ENCODE measurements at regions of chr20 and their contacts with region 1.

Region 1: DNA sequence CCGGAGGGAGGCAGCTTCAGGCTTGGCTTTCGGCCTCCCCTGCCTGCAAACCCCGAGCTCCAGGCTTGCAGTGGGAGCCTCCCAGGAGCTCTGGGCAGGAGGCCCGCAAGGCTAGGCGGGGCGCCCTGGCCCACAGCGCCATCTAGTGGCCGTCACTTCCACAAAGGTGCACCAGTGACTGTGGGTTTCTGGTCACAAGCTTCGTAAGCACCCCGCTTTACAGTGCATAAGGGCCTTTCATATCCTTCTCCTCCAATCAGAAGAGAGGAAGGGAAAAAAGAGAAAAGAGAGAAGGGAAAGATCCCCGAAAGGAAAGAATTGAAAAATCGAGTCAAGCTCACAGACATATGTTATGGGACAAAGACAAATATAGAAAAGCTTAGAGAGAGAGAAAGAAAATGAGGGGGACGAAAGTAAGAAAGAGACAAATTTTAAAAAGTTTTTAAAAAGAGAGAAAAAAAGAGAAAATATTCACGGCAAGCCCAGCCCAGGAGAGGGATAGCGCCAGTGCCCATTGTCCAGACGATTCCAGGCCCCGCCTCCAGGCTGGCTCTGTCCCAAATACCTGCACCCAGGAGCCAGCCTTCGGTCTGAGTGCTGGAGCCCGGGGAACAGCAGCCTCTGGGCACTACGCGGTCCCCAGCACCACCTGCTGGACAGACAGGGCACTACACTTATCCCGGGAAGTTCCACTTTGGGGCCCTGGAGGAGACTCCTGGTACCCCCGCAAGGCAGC is 207.1 kb downstream of the PREX1 start:
- DNase-seq: peak; percentile 97
- ATAC-seq: peak; percentile 90
- H3K4me3 Mint-ChIP-seq: peak overlapping the region; percentile 73
- H3K27ac Mint-ChIP-seq: peak overlapping the region; percentile 50
- H3K4me1 Mint-ChIP-seq: peaks cover 8% of the 10 kb centered on the region; the same call in 1 of the 2 replicates
- H3K27me3 Mint-ChIP-seq: no peaks in the 10 kb centered on the region; the same call in 1 of the 2 replicates
- CTCF ChIP-seq: peak; percentile 84

Region 2: GRCh38 chr20:48188657-48189551 is 431.8 kb before region 1 on chr20:
- CTCF ChIA-PET with region 1: interaction called, 20 read pairs
- POLR2A ChIA-PET with region 1: interaction called, 3 read pairs
- DNase-seq: peak; percentile 34
- ATAC-seq: peak; percentile 63; the same call in 1 of the 2 replicates
- H3K4me3 Mint-ChIP-seq: no peak overlapping the region
- H3K27ac Mint-ChIP-seq: no peak overlapping the region; the same call in 1 of the 2 replicates
- H3K4me1 Mint-ChIP-seq: peaks cover 18% of the 10 kb centered on the region
- H3K27me3 Mint-ChIP-seq: no peaks in the 10 kb centered on the region; the same call in 1 of the 2 replicates
- CTCF ChIP-seq: no peak

Region 3: DNA sequence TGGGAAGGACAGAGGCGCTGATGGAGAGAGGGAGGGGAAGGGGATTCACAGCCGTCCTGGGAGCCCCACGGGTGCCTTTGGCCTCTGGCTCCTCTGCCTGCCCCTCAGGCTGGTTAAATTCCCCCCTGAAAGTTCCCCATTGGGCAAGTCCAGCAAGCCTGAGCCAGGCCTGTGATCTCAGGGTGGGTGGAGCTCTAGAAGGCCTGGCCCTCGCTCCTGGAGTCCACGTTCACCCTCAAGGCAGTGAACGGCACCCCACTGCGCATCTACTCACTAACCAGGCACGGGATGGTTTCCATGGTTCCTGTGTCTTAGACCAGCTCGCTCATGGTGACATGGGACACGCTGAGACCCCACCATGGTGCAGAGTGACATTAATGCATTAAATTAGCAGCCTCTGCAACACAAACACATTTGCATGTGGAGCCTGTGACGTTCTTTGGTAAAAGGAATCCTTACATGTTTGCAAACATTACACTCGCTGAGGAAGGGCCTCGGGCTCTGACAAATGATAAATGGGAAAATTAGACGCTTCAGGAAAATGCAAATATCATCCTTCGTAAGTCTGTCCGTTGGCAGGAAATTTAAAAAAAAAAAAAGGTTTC is 245.6 kb before region 1 on chr20:
- CTCF ChIA-PET with region 1: interaction called, 11 read pairs
- POLR2A ChIA-PET with region 1: no interaction called
- DNase-seq: no peak
- ATAC-seq: peak; percentile 12; the same call in 1 of the 2 replicates
- H3K4me3 Mint-ChIP-seq: no peak overlapping the region
- H3K27ac Mint-ChIP-seq: no peak overlapping the region
- H3K4me1 Mint-ChIP-seq: peaks cover 42% of the 10 kb centered on the region
- H3K27me3 Mint-ChIP-seq: peaks cover 4% of the 10 kb centered on the region; the same call in 1 of the 2 replicates
- CTCF ChIP-seq: no peak

Region 4: DNA sequence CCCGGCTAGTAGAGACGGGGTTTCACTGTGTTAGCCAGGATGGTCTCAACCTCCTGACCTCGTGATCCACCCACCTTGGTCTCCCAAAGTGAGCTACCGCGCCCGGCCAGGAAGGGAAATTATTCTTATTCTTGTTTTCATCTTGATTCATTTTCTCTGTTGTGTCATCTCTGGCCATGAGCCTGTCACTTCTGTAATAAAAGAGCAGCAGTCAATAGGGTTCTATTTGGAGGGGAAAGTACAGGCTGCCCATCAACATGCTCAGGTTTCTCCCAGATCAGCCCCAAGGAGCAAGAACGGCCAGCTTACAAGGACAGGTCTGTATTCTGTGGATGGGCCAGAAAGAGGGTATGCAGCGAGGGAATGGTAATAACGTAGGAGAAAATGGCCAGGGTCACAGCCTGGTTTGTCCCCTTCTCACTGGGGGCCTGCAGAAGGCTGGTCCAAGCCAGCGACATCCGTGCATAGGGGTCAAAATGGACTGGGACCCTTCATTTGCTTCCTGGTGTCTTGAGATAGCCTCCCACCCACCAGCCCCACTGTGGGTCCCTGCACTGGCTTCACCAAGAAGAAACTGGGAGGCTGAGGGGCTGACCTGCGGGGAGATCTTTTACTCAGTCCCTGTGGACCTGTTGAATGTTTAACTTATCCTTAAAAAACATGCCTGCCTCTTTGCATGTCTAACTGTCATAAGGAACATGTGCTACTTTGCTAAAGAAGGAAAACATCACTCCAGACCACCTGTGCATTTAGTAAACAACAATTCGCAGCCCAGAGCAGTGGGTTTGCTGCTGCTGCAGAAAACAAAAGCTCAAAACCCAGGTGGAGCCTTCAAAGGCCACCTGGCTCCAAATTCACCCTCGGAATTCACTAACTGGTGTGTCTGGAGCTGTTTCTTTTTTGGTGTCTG is 137.6 kb before region 1 on chr20:
- CTCF ChIA-PET with region 1: interaction called, 23 read pairs
- POLR2A ChIA-PET with region 1: no interaction called
- DNase-seq: no peak
- ATAC-seq: no peak
- H3K4me3 Mint-ChIP-seq: no peak overlapping the region
- H3K27ac Mint-ChIP-seq: no peak overlapping the region
- H3K4me1 Mint-ChIP-seq: peaks cover 28% of the 10 kb centered on the region
- H3K27me3 Mint-ChIP-seq: no peaks in the 10 kb centered on the region
- CTCF ChIP-seq: no peak

Region 5: DNA sequence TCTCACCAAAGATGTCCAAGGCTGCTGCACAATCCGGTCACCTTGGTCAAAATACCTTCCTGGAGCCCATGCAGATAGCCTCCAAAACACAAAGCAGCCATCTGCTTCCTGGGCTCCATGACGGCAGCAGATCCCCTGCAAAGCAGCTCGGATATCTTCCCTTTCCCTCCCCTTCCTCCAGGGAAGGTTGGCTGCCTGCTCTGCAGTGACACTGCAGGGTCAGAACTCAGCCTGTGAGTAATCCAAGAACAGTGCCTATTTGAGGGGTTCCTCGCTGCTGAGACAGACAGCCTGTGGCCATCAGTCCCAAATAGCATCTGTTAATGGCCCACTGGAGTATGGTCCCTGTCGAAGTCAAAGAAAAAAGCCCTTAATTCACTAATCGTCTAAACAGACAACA is 63.7 kb before region 1 on chr20:
- CTCF ChIA-PET with region 1: interaction called, 18 read pairs
- POLR2A ChIA-PET with region 1: no interaction called
- DNase-seq: no peak
- ATAC-seq: peak; percentile 43; the same call in 1 of the 2 replicates
- H3K4me3 Mint-ChIP-seq: no peak overlapping the region
- H3K27ac Mint-ChIP-seq: no peak overlapping the region
- H3K4me1 Mint-ChIP-seq: 0 out of 2 replicates have a peak, but pooled peaks cover 4% of the 10 kb centered on the region
- H3K27me3 Mint-ChIP-seq: no peaks in the 10 kb centered on the region
- CTCF ChIP-seq: no peak

Region 6: DNA sequence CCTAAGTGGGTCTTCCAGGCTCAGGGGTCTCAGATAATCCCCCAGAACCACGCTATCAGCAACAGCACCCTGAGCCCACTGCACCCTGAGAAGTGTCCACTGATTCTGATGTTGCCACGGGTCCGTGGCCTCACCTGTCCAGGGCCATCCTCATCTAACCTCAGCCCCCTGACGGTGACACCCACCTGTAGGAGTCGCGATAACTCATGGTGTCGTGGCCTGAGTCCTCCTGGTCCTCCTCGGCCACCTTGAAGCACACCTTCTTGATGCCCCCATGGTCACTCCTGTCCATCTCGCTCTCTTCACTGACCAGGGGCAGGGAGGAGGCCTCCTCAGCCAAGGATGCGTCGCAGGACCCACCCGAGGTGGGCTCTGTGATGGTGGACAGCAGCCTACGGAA is 25.0 kb after region 1 on chr20:
- CTCF ChIA-PET with region 1: no interaction called
- POLR2A ChIA-PET with region 1: no interaction called
- DNase-seq: no peak
- ATAC-seq: no peak
- H3K4me3 Mint-ChIP-seq: no peak overlapping the region
- H3K27ac Mint-ChIP-seq: peak overlapping the region; percentile 48; the same call in 1 of the 2 replicates
- H3K4me1 Mint-ChIP-seq: no peaks in the 10 kb centered on the region
- H3K27me3 Mint-ChIP-seq: no peaks in the 10 kb centered on the region
- CTCF ChIP-seq: no peak

Region 7: GRCh38 chr20:48657475-48658470 is 37.1 kb after region 1 on chr20:
- CTCF ChIA-PET with region 1: interaction called, 23 read pairs
- POLR2A ChIA-PET with region 1: no interaction called
- DNase-seq: peak; percentile 65
- ATAC-seq: peak; percentile 85
- H3K4me3 Mint-ChIP-seq: no peak overlapping the region
- H3K27ac Mint-ChIP-seq: no peak overlapping the region; the same call in 1 of the 2 replicates
- H3K4me1 Mint-ChIP-seq: 0 out of 2 replicates have a peak, but pooled peaks cover 4% of the 10 kb centered on the region
- H3K27me3 Mint-ChIP-seq: no peaks in the 10 kb centered on the region
- CTCF ChIP-seq: peak; percentile 94

Region 8: DNA sequence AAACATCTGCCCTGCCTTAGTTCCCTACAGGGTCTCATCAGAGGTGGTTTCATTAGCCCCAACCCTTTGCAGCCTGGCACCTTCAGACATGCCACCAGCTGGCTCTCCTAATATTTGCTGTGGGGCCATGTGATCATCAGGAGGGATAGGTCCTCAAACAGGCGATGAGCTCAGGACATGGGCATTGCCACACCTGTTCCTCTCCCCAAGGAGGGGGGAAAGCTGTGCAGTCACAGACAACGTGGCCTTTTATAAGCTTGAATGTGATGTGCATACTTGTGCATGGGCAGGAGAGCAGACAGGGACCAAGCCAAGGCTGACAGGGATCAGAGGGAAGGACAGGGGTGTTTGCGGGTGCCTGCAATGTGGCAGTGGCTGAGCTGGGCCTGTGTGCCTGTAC is 736.0 kb after region 1 on chr20:
- CTCF ChIA-PET with region 1: no interaction called
- POLR2A ChIA-PET with region 1: no interaction called
- DNase-seq: no peak
- ATAC-seq: no peak
- H3K4me3 Mint-ChIP-seq: no peak overlapping the region
- H3K27ac Mint-ChIP-seq: no peak overlapping the region
- H3K4me1 Mint-ChIP-seq: no peaks in the 10 kb centered on the region
- H3K27me3 Mint-ChIP-seq: no peaks in the 10 kb centered on the region
- CTCF ChIP-seq: no peak

Measured in WTC11 (cell line).